Heart right ventricle (tissue), 16 donors: ENCODE measurements at regions of chr17 and their contacts with region 1.

Region 1: GRCh38 chr17:45902892-45903346 is 8.6 kb downstream of the MAPT start:
- DNase-seq: no peak
- ATAC-seq: peak in 6 of 8 donors; percentile 49 to 74 (median 60)
- H3K4me3 ChIP-seq: peak overlapping the region in 3 of 10 donors; percentile 10 to 21 (median 11)
- H3K27ac ChIP-seq: peak overlapping the region in 3 of 10 donors; percentile 19 to 70 (median 39)
- H3K4me1 ChIP-seq: peaks cover 0 to 34% (median 14%) of the 10 kb centered on the region in 9 donors
- H3K27me3 ChIP-seq: peaks cover 0 to 16% (median 9%) of the 10 kb centered on the region in 7 donors
- CTCF ChIP-seq: no peak

Region 2: DNA sequence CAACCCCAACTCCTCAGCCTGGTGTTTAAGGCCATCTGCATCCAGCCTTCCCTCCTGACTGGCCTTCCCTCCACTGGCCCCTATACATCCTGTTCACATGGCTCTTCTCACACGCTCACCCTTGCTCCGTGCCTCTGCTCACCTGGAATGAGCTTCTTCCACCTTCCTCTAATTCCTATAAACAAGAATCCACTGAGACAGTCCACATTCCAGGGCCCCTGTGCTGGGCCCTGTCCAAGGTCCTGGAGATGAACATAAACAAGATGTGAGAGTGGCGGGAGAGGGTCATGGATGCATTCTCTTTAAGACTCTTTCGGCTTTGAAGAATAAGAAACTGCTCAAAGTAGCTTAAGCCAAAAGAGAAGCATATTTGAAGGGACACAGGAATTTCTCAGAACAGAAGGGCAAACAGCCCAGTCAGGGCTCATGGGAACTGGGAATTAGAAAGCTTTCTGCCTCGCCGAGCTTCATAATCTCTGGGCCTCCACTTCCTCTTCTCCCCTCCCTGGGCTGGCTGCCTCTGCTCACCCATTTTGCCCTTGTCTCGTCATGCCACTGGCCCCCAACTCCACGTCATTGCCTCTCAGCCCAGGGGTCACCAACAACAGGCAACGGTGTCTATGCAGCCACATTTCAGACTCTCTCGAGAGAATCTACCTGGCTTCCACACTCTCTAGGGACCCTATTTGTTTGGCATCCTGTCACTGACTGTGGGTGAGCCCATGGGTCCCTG is 44.8 kb before region 1 on chr17:
- intact Hi-C with region 1: no loop called
- DNase-seq: no peak
- ATAC-seq: peak in 2 of 8 donors; percentile 37 to 41
- H3K4me3 ChIP-seq: no peak overlapping the region
- H3K27ac ChIP-seq: no peak overlapping the region
- H3K4me1 ChIP-seq: no peaks in the 10 kb centered on the region
- H3K27me3 ChIP-seq: peaks cover 0 to 46% (median 17%) of the 10 kb centered on the region in 7 donors
- CTCF ChIP-seq: no peak

Region 3: DNA sequence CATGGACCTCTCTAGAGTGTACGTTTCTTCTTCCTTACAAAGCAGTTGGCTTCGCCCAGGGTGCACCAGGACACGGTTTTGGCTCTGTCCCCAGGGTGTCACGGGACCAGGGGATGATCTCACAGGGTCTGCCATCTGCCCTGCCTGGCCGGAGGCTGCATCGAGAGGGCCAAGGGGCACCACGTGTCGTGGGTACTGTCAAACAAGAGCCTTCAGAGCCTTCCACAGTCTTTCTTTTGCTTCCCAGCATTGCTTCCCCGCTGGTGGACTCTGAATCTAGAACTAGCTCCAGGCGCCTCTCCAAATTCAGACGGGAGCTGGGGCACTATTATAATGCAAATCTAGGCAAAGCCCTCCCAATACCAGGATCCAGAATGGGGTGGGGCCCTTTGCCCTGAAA is 39.4 kb after region 1 on chr17:
- intact Hi-C with region 1: loop called in 1 of 10 experiments (anchors 5 kb)
- DNase-seq: peak; percentile 81 to 82
- ATAC-seq: peak; percentile 94 to 99 (median 96)
- H3K4me3 ChIP-seq: no peak overlapping the region
- H3K27ac ChIP-seq: peak overlapping the region; percentile 20 to 77 (median 67)
- H3K4me1 ChIP-seq: peaks cover 0 to 30% (median 19%) of the 10 kb centered on the region in 9 donors
- H3K27me3 ChIP-seq: no peaks in the 10 kb centered on the region
- CTCF ChIP-seq: no peak